AG04449 (cell line): ENCODE measurements at regions of chr3 and their contacts with region 1.

Region 1: GRCh38 chr3:33787328-33788009 is 11.0 kb upstream of the PDCD6IP start:
- DNase-seq: peak; percentile 9
- H3K4me3 ChIP-seq: peak overlapping the region; percentile 51
- CTCF ChIP-seq: peak; percentile 79

Region 2: DNA sequence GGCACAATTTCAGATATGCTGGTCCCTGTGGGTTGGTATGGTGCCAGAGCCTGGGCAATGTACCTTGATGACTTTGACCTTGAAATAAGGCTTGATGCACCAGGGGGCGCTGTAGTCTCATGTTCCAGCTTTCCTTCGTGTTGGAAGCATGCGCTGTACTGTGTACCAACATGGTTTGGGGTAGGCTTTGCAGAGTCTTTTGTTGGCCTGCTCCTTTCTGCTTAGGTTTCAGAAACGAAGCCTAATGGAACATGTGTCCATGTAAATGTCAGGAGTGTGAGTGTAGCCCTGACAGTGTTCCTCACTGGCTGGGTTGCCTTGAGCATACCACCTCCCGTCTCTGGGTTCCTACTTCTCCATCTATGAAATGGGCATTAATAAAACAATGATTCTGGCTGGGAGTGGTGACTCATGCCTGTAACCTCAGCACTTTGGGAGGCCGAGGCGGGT is 839.7 kb before region 1 on chr3:
- CTCF ChIA-PET with region 1: interaction called, 34 read pairs
- POLR2A ChIA-PET with region 1: no interaction called
- DNase-seq: peak; percentile 7
- H3K4me3 ChIP-seq: no peak overlapping the region
- CTCF ChIP-seq: peak; percentile 78

Region 3: DNA sequence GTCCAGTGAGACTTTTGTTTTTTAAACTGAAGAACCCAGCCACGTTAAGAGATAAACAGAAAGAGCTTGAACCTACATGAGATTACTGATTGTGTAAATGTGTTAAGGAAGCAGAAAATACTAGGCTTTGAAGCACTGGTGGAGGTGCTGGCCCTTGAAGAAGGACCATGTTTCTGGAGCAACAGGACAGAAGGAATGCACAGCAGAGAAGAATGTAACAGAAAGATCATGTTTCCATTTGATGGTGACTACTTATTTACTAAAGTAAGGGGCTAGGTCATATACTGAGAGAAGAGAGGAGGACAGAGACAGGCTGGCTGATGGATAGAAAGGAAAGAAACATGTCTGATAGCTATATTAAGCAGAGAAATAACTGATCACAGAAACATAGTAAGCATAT is 158.2 kb before region 1 on chr3:
- CTCF ChIA-PET with region 1: interaction called, 23 read pairs
- POLR2A ChIA-PET with region 1: no interaction called
- DNase-seq: no peak
- H3K4me3 ChIP-seq: no peak overlapping the region
- CTCF ChIP-seq: no peak

Region 4: DNA sequence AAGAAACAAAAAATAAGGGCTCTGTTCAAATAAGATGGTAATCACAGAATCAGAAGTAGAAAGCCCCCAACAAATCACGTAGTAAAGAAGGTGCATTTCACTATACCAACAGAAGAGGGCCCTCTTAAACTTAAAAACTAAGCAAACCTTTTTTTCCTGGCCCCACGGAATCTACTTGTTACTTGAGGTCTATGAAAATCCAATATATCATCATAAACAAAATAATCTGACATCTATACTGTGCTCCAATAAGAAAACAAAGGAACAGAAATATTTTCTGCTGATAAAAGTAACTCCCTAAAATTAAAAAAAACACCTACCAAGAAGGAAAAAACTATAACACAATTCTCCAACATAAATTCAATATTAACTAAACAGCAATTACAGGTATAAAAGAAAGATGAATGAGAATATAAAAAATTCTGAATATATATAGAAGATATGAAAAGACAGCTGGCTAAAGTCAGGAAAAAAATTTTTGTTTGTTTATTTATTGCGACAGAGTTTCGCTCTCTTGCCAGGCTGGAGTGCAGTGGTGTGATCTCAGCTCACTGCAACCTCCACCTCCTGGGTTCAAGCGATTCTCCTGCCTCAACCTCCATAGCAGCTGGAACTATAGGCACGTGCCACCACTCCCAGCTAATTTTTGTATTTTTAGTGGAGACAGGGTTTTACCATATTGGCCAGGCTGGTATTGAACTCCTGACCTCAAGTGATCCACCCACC is 151.2 kb before region 1 on chr3:
- CTCF ChIA-PET with region 1: interaction called, 47 read pairs
- POLR2A ChIA-PET with region 1: no interaction called
- DNase-seq: no peak
- H3K4me3 ChIP-seq: no peak overlapping the region
- CTCF ChIP-seq: peak; percentile 49

Region 5: GRCh38 chr3:33646406-33646805 is 141.1 kb before region 1 on chr3:
- CTCF ChIA-PET with region 1: interaction called, 12 read pairs
- POLR2A ChIA-PET with region 1: no interaction called
- DNase-seq: no peak
- H3K4me3 ChIP-seq: no peak overlapping the region
- CTCF ChIP-seq: no peak

Region 6: DNA sequence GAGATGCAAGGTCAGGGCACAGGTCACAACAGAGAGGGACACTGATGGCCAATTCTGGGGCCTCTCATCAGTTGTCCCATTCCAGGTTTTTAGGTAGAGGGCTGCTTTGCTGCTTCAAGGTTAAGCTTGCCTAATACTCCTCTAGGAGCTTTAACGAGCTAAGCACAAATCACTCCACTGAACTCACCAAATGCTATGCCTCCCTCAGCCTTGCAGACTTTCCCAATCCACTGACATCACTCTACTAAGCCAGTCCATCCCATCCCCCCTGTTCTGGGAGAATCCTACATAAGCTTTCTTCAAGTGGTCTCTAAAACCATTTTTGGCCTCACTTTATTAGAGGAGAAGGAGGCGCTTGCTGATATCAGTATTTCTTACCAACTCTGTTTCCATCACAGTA is 13.8 kb before region 1 on chr3:
- CTCF ChIA-PET with region 1: interaction called, 130 read pairs
- POLR2A ChIA-PET with region 1: no interaction called
- DNase-seq: peak; percentile 9
- H3K4me3 ChIP-seq: no peak overlapping the region
- CTCF ChIP-seq: no peak

Region 7: DNA sequence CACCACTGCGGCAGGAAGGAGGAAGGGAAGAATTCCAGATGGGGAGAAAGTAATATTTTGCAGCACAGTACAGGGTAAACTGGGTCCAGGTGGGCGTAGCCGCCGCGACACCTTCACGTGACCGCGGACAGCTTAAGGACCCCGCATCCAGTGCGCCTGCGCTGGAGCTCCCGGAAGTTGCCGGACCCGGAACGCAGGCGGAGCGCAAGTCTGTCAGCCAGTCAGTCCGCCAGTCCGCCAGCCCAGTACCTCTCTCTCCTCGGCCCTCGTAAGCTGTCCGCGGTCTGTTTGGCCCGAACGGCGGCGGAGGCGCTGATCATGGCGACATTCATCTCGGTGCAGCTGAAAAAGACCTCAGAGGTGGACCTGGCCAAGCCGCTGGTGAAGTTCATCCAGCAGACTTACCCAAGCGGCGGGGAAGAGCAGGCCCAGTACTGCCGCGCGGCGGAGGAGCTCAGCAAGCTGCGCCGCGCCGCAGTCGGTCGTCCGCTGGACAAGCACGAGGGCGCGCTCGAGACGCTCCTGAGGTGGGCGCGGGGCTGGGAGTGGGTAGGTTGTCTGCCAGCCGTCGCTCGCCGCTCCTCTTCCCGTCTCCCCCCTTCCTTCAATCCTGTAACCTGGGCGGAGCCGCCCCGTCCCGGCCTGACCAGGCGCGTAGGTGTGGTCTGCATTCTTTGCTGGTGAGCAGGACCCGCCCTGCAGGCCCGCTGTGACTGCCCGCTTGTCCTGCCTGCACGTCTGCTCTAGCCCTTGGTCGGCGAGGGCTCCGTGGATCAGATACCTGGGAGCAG is 11.1 kb after region 1 on chr3 and contains the start of gene PDCD6IP:
- CTCF ChIA-PET with region 1: interaction called, 53 read pairs
- POLR2A ChIA-PET with region 1: interaction called, 5 read pairs
- DNase-seq: peak; percentile 60
- H3K4me3 ChIP-seq: peak within 1 kb of the TSS; percentile 93
- CTCF ChIP-seq: peak; percentile 18

Region 8: GRCh38 chr3:33855884-33856546 is 68.5 kb after region 1 on chr3:
- CTCF ChIA-PET with region 1: no interaction called
- POLR2A ChIA-PET with region 1: no interaction called
- DNase-seq: no peak
- H3K4me3 ChIP-seq: no peak overlapping the region
- CTCF ChIP-seq: no peak